ENCODE measurements at regions of chr4 and their contacts with region 1.

Region 1: DNA sequence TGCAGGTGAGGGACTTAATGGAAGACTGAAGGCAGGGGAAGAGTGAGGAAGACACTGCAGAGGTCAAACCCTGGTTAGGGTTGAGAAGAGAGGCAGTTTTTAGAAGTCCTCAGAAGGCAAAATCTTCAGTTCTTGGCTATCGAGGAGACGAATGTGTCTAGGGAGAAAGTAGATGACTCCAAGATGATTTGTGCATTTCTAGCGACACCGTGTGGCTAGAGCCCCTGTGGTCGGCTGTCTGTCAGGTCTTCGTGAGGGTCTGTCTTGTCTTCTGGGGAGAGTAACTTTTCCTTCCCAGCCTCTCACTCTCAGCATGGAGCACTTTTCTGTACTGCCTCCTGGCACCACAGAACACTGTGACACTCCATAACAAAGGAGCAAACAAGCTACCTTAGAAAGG is 458.1 kb downstream of the STIM2 start:
- DNase-seq: no peak
- ATAC-seq: no peak
- H3K4me3 ChIP-seq: no peak overlapping the region
- H3K27ac ChIP-seq: no peak overlapping the region
- H3K4me1 ChIP-seq: no peaks in the 10 kb centered on the region
- H3K27me3 ChIP-seq: no peaks in the 10 kb centered on the region
- CTCF ChIP-seq: peak; percentile 56

Region 2: GRCh38 chr4:27048429-27049238 is 270.1 kb before region 1 on chr4:
- CTCF ChIA-PET with region 1: no interaction called
- POLR2A ChIA-PET with region 1: no interaction called
- in situ Hi-C with region 1: no loop called
- intact Hi-C with region 1: loop called (anchors 2 kb)
- DNase-seq: peak; percentile 5
- ATAC-seq: no peak
- H3K4me3 ChIP-seq: peak overlapping the region in 1 of 2 experiments; percentile 41; a peak in 2 of 4 replicates
- H3K27ac ChIP-seq: no peak overlapping the region
- H3K4me1 ChIP-seq: peaks cover 2% of the 10 kb centered on the region; the same call in 1 of the 2 replicates
- H3K27me3 ChIP-seq: no peaks in the 10 kb centered on the region
- CTCF ChIP-seq: peak; percentile 65; the same call in 1 of the 2 replicates

Region 3: DNA sequence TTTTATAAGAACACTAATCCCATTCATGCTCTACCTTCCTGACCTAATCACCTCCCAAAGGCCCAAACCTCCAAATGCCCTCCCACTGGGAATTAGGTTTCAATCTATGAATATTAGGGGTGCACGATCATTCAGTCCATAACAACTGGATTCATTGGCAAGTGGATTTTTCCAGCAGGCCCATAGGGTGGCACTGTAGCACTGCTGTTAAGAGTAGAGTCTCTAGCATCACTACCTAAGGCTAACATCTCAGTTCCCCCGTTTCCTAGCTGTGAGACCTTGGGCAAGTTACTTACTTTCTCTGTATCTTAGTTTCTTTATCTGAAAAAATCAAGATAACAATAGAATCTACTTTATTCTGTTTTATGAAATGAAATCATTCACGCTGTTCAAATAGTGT is 142.3 kb before region 1 on chr4:
- CTCF ChIA-PET with region 1: no interaction called
- POLR2A ChIA-PET with region 1: no interaction called
- in situ Hi-C with region 1: no loop called
- intact Hi-C with region 1: loop called (anchors 5 kb)
- DNase-seq: no peak
- ATAC-seq: peak; percentile 72; the same call in 1 of the 2 replicates
- H3K4me3 ChIP-seq: no peak overlapping the region
- H3K27ac ChIP-seq: no peak overlapping the region
- H3K4me1 ChIP-seq: no peaks in the 10 kb centered on the region
- H3K27me3 ChIP-seq: no peaks in the 10 kb centered on the region
- CTCF ChIP-seq: peak; percentile 61

Region 4: GRCh38 chr4:27278615-27279375 is 39.9 kb before region 1 on chr4:
- CTCF ChIA-PET with region 1: no interaction called
- POLR2A ChIA-PET with region 1: no interaction called
- in situ Hi-C with region 1: no loop called
- intact Hi-C with region 1: no loop called
- DNase-seq: no peak
- ATAC-seq: no peak
- H3K4me3 ChIP-seq: no peak overlapping the region
- H3K27ac ChIP-seq: no peak overlapping the region
- H3K4me1 ChIP-seq: no peaks in the 10 kb centered on the region
- H3K27me3 ChIP-seq: no peaks in the 10 kb centered on the region
- CTCF ChIP-seq: no peak

Measured in Panc1 (cell line).